Left colon (tissue), 2 donors: ENCODE measurements at regions of chr16 and their contacts with region 1.

Region 1: DNA sequence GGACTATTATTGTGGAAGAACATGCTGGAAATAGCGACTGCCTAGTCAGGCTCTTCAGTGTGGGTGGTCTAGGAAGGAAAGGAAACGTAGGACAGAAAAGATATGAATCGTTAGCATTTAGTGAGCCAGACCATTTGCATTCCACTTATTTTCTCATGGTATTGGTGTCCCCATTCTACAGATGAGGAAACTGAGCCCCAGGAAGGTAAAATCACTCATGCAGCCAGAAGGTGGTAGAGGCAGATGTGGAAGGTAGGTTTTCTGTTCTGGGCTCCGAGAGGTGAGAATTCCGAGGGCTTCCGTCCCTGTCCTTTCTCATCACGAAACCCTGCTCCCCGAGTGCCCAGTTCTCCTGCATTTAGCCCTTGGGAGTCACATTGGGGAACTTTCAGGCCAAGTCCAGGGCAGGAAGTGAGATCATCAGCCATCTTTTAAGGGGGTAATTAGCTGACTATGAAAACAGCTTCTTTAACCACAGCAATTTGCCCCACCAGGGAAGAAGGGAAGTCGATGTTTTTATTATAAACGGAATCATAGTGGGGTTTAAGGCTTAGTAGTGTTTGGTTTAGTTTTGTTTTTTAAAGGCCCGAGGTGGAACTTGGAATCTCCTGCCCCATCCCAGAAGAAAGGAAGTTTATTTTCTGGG is 110.7 kb upstream of the IRX3 start:
- DNase-seq: no peak
- ATAC-seq: no peak

Region 2: DNA sequence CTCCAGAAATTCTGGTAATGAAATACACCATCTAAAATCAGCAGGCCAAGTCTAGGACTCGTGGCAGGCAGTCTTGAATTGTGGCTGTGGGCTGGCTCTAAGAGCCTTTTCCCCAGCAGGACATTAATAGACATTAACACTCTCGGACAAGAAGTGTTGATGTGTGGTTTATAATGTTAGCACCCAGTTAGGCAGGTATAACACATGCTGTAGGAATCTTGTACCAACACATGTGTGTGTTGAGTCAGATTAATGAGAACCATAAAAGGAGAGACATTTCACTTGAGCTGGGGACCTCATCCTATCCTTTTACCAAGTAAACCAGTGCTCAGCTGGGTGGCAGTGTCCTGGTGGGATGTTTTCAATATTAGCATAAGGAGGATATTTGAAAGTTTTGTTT is 428.9 kb before region 1 on chr16:
- intact Hi-C with region 1: loop called in 1 of 2 experiments (anchors 5 kb)
- DNase-seq: no peak
- ATAC-seq: no peak

Region 3: DNA sequence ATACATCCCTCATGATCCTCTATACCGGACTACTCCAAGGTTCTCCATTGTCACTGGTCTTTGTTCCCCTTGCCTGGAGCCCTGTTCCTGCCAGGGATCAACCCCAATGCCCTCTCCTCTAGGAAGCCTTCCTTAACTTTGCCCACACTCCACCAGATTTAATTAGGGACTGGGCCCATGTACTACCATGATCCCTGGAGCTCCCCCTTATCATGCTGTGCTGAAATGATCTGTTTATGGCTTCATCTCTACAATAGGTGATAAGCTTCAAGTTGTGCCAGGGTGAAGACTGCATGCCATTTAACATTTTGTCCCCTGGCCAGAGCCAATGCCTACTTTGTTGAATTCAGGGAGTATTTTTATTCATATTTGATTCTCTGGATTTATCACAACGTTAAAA is 515.4 kb after region 1 on chr16:
- intact Hi-C with region 1: no loop called
- DNase-seq: no peak
- ATAC-seq: no peak